ENCODE measurements at regions of chr3 and their contacts with region 1.

Region 1: DNA sequence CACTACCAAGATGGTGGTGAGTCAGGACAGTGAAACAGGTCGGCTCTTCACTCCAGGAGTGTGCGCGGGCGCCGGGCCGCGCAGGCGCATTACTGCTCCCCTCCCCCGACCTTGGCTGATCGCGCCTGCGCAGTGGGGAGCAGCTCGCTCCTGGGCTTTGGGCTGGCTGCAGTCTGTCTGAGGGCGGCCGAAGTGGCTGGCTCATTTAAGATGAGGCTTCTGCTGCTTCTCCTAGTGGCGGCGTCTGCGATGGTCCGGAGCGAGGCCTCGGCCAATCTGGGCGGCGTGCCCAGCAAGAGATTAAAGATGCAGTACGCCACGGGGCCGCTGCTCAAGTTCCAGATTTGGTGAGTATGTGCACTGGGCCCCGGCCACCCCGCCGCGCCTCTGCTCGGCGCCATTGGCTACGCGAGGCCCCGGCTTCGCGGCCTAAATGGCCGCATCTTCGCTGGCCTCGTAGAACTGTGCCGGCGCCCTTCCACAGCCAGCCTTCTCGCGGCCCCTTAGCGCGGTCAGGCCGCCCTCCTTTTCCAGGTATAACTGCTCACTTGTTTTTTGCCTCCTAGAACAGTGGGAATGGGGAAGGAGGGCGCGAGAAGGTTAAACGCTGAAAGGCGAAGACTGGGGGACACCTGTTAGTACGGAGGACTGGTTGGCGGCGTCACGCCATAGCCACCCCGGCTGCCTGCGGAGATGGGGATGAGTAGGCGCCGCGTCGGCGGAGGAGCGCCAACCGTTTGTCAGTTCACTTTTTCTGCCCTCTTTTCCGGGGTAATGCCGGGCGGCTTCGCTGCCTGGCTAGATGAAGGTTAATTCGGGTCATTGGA is at the start of gene SELENOT:
- DNase-seq: peak; percentile 93 to 97
- H3K4me3 ChIP-seq: peak within 1 kb of the TSS; percentile 85 to 92
- H3K27ac ChIP-seq: peak within 1 kb of the TSS; percentile 96 to 97
- H3K4me1 ChIP-seq: peaks cover 0 to 45% (median 11%) of the 10 kb centered on the region in 4 donors
- H3K27me3 ChIP-seq: no peaks in the 10 kb centered on the region
- CTCF ChIP-seq: peak; percentile 31 to 42

Region 2: DNA sequence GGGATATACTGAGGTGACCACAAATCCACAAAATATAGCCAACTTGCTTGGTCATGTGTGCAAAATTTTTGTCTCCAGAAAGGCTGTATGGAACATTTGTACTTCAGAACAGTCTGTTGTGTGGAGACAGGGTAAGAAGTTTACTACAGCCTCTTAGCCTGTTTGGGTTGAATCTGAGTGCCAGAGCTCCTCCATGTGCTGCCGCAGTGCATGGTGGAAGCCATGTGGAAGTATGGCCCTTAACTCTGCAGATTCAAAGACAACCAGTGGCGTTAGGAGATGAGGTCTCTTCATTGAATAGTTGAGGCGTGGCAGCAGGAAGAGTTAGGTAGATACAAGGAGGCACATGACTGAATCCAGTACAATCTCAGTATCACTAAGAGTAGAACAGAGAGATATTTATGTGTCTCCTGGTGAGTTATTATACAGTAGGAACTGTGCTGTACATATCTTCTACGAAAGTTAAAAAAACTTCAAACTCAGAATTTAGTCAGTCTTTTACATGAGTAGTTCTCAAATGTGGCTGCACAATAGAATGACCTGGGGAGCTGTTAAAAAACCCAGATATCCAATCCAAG is 47.4 kb before region 1 on chr3:
- intact Hi-C with region 1: loop called (anchors 10 kb)
- DNase-seq: no peak
- H3K4me3 ChIP-seq: no peak overlapping the region
- H3K27ac ChIP-seq: no peak overlapping the region
- H3K4me1 ChIP-seq: no peaks in the 10 kb centered on the region
- H3K27me3 ChIP-seq: no peaks in the 10 kb centered on the region
- CTCF ChIP-seq: no peak

Region 3: GRCh38 chr3:150763122-150763841 is 159.9 kb after region 1 on chr3 and contains the start of gene SIAH2:
- intact Hi-C with region 1: loop called (anchors 5 kb)
- DNase-seq: peak; percentile 92 to 96
- H3K4me3 ChIP-seq: peak within 1 kb of the TSS; percentile 77 to 90
- H3K27ac ChIP-seq: peak within 1 kb of the TSS; percentile 99
- H3K4me1 ChIP-seq: peaks cover 3 to 40% (median 24%) of the 10 kb centered on the region in 4 donors
- H3K27me3 ChIP-seq: no peaks in the 10 kb centered on the region
- CTCF ChIP-seq: no peak

Measured in tibial artery (tissue), 4 donors.